CD4-positive, alpha-beta T cell (primary cell): ENCODE measurements at regions of chr9 and their contacts with region 1.

Region 1: DNA sequence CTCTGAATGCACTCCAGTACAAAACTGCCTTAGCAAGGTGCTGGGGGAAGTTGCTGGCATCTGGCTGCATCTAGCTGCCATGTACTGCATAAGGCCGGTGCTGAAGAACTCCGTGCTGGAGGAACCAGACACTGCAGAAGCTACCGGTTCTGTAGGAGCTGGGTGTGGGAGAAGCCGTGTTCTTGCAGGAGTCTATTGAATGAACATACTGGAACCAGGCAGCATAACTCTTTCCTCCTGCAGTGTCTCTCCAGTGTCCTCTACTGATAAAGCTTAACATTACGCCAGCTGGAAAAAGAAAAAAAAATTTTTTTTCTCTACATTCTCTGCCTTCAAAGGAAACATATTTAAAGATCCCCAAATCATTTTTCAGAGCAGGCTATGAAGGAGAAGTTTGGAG is 38.5 kb downstream of the VPS13A start:
- DNase-seq: no peak
- ATAC-seq: no peak
- H3K4me3 ChIP-seq: no peak overlapping the region
- H3K4me3 Mint-ChIP-seq: no peak overlapping the region
- H3K27ac ChIP-seq: no peak overlapping the region
- H3K27ac Mint-ChIP-seq: no peak overlapping the region
- H3K4me1 ChIP-seq: no peaks in the 10 kb centered on the region
- H3K4me1 Mint-ChIP-seq: no peaks in the 10 kb centered on the region
- H3K27me3 ChIP-seq: no peaks in the 10 kb centered on the region
- H3K27me3 Mint-ChIP-seq: no peaks in the 10 kb centered on the region
- CTCF ChIP-seq: peak; percentile 21

Region 2: GRCh38 chr9:75962013-75962661 is 1253.7 kb before region 1 on chr9:
- CTCF ChIA-PET with region 1: no interaction called
- POLR2A ChIA-PET with region 1: no interaction called
- intact Hi-C with region 1: no loop called
- DNase-seq: no peak
- ATAC-seq: no peak
- H3K4me3 ChIP-seq: no peak overlapping the region
- H3K4me3 Mint-ChIP-seq: peak overlapping the region; percentile 55
- H3K27ac ChIP-seq: no peak overlapping the region
- H3K27ac Mint-ChIP-seq: peak overlapping the region; percentile 54
- H3K4me1 ChIP-seq: peaks cover 11% of the 10 kb centered on the region
- H3K4me1 Mint-ChIP-seq: peaks cover 71% of the 10 kb centered on the region
- H3K27me3 ChIP-seq: no peaks in the 10 kb centered on the region
- H3K27me3 Mint-ChIP-seq: no peaks in the 10 kb centered on the region
- CTCF ChIP-seq: no peak

Region 3: DNA sequence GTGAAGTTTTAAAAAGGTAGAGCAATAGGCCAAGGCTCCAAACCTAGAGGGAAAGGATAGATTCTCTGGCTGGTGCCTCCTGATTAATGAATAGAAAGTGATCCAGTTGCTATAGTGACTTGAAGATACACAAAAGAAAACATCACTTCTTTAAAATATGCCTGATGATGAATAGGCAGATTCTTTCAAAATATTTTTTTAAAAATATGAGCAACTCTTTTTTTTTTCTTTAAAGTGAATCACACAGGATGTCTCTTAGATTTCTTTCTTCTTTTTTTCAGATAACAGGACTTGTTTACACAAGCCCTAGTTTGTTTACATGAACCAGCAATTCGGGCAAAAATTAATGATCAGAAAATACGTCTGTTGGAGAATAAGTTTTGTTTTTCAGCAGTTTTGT is 946.1 kb before region 1 on chr9:
- CTCF ChIA-PET with region 1: no interaction called
- POLR2A ChIA-PET with region 1: no interaction called
- intact Hi-C with region 1: no loop called
- DNase-seq: no peak
- ATAC-seq: no peak
- H3K4me3 ChIP-seq: no peak overlapping the region
- H3K4me3 Mint-ChIP-seq: no peak overlapping the region
- H3K27ac ChIP-seq: no peak overlapping the region
- H3K27ac Mint-ChIP-seq: no peak overlapping the region
- H3K4me1 ChIP-seq: no peaks in the 10 kb centered on the region
- H3K4me1 Mint-ChIP-seq: no peaks in the 10 kb centered on the region
- H3K27me3 ChIP-seq: no peaks in the 10 kb centered on the region
- H3K27me3 Mint-ChIP-seq: no peaks in the 10 kb centered on the region
- CTCF ChIP-seq: no peak

Region 4: GRCh38 chr9:77163884-77164283 is 52.0 kb before region 1 on chr9:
- CTCF ChIA-PET with region 1: interaction called, 13 read pairs
- POLR2A ChIA-PET with region 1: no interaction called
- intact Hi-C with region 1: no loop called
- DNase-seq: no peak
- ATAC-seq: no peak
- H3K4me3 ChIP-seq: no peak overlapping the region
- H3K4me3 Mint-ChIP-seq: no peak overlapping the region
- H3K27ac ChIP-seq: no peak overlapping the region
- H3K27ac Mint-ChIP-seq: no peak overlapping the region
- H3K4me1 ChIP-seq: no peaks in the 10 kb centered on the region
- H3K4me1 Mint-ChIP-seq: no peaks in the 10 kb centered on the region
- H3K27me3 ChIP-seq: peaks cover 0 to 4% of the 10 kb centered on the region in 2 experiments
- H3K27me3 Mint-ChIP-seq: peaks cover 14% of the 10 kb centered on the region
- CTCF ChIP-seq: no peak

Region 5: DNA sequence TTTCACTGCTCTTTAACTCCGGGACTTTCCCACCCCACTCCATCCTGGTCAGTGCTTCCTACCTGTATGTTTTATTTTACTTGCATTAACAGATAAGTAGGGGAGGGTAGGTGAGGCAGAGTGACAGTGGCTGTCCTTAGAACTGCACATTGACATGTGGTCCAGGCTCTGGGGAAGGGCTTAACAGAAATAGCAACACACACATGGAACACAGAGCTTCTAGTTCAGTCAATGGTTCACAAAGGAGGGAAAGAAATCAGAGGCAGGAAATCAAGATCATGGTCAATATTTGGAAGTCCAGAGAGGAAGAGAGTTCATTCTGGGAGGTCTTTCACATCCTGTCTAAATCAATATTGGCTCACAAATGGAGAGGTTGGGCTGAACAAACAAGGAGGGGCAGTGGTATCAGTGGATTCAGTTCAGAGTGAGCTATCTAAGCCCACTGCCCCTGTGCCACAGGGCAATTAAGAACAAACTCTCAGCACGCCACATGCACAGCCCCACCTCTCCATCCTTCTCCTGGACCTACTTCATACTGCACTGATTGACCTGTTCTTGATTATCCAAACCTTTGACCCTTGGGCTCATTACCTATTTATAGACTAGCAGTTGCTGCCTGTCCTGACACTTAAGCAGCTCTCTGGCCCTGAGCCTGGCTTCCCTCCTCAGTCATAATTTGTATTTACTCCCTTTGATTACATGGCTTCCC is 44.7 kb before region 1 on chr9:
- CTCF ChIA-PET with region 1: interaction called, 13 read pairs
- POLR2A ChIA-PET with region 1: no interaction called
- intact Hi-C with region 1: loop called (anchors 5 kb)
- DNase-seq: no peak
- ATAC-seq: no peak
- H3K4me3 ChIP-seq: no peak overlapping the region
- H3K4me3 Mint-ChIP-seq: no peak overlapping the region
- H3K27ac ChIP-seq: no peak overlapping the region
- H3K27ac Mint-ChIP-seq: peak overlapping the region; percentile 2
- H3K4me1 ChIP-seq: no peaks in the 10 kb centered on the region
- H3K4me1 Mint-ChIP-seq: peaks cover 6% of the 10 kb centered on the region
- H3K27me3 ChIP-seq: no peaks in the 10 kb centered on the region
- H3K27me3 Mint-ChIP-seq: no peaks in the 10 kb centered on the region
- CTCF ChIP-seq: no peak